Activated CD4-positive, alpha-beta T cell treated with anti-CD3 and anti-CD28 coated beads for 36 hours (primary cell): ENCODE measurements at regions of chr4 and their contacts with region 1.

Region 1: GRCh38 chr4:7831330-7831729 is 108.3 kb downstream of the AFAP1 start:
- DNase-seq: peak; percentile 63
- ATAC-seq: peak; percentile 87
- H3K4me3 Mint-ChIP-seq: no peak overlapping the region
- H3K27ac Mint-ChIP-seq: peak overlapping the region; percentile 69
- H3K4me1 Mint-ChIP-seq: peaks cover 56% of the 10 kb centered on the region
- H3K27me3 Mint-ChIP-seq: no peaks in the 10 kb centered on the region

Region 2: DNA sequence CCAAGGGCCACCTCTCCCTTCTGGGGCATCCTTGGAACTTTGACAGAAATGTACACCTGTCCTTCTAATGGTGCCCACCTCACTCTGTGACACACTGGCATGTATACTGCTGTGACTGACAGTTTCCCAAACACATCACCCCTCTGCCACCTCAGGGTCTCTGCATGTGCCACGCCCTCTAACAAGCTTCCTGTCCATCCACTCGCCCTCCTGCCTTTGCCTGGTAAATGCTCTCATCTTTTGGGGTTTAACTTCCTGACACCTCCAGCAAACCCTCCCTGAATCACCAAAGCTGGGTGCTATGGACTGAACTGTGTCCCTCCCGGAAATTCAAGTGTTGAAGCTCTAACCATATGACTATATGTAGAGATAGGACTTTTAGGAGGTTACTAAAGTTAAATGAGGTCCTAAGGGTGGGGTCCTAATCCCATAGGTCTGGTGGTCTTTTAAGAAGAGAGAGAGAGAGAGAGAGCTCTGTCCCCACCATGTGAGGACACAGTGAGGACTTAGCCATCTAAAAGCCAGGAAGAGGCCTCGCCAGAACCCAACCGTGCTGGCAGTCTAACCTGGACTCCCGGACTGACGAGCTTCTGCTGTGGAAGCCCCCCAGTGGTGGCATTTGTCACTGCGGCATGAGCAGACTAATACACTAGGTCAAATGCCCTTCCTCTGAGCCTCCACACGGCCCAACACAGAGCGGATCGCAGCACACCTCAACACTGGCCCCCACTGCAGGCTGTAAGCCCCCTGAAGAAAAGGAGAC is 12.7 kb after region 1 on chr4:
- CTCF ChIA-PET with region 1: interaction called, 10 read pairs
- POLR2A ChIA-PET with region 1: no interaction called
- intact Hi-C with region 1: no loop called
- DNase-seq: peak; percentile 83
- ATAC-seq: peak; percentile 87
- H3K4me3 Mint-ChIP-seq: no peak overlapping the region
- H3K27ac Mint-ChIP-seq: peak overlapping the region; percentile 52
- H3K4me1 Mint-ChIP-seq: peaks cover 27% of the 10 kb centered on the region
- H3K27me3 Mint-ChIP-seq: no peaks in the 10 kb centered on the region

Region 3: DNA sequence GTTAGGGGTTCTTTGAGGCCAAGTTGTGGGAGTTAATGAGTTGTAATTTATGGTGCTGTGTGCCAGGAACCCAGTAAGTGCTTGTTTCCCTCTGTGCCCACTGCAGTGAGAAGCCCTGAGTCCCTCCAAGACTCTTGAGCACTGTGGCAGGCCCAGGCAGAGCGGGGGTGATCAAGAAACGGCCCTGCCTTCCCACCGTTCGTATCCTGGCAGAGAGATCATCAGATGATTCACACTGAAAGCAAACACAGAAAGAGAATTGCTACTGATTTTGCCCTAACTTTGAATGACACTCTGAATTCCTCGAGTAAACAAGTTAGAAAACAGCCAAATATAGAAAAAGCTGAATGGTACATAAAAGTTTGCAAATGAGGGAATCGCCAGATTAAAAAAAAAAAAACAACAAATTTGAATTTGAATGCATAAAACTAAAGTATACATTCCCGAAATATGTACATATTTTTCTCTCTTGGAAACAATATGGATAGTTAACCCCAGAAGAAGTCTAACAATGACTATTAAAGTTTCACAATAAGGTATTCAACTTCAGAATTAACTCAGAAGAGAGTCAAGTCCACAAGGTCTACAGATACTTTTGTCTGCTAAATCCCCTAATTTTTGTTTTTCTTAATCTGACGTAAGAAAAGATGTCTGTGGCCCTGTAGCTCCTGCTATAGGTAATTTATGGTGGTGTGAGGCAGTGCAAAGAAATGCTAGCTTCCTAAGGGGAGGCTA is 36.5 kb after region 1 on chr4:
- CTCF ChIA-PET with region 1: no interaction called
- POLR2A ChIA-PET with region 1: no interaction called
- intact Hi-C with region 1: loop called in 1 of 2 experiments (anchors 1 kb)
- DNase-seq: peak; percentile 51
- ATAC-seq: peak; percentile 53
- H3K4me3 Mint-ChIP-seq: no peak overlapping the region
- H3K27ac Mint-ChIP-seq: peak overlapping the region; percentile 74
- H3K4me1 Mint-ChIP-seq: peaks cover 30% of the 10 kb centered on the region
- H3K27me3 Mint-ChIP-seq: no peaks in the 10 kb centered on the region

Region 4: DNA sequence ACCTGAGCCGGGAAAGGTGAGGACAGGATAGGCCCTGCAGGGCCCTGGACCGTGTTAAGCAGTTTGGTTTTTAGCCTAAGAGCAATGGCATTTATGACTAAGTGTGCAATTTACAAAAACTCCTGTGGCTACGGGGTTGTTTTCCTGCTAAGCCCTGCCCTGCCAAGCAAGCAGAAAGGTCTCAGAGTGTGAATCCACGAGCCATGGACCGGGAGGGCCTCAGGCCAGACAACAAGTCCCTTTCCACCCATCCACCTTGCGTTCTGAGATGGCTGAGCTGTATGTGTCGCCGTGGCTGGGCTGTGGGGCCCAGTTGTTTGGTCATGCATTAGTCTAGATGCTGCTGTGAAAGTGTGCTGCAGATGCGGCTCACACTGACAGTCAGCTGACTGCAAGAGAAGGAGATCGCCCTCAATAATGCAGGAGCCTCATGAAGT is 142.2 kb after region 1 on chr4:
- CTCF ChIA-PET with region 1: no interaction called
- POLR2A ChIA-PET with region 1: no interaction called
- intact Hi-C with region 1: no loop called
- DNase-seq: peak; percentile 41
- ATAC-seq: peak; percentile 10
- H3K4me3 Mint-ChIP-seq: no peak overlapping the region
- H3K27ac Mint-ChIP-seq: peak overlapping the region; percentile 52
- H3K4me1 Mint-ChIP-seq: peaks cover 44% of the 10 kb centered on the region
- H3K27me3 Mint-ChIP-seq: no peaks in the 10 kb centered on the region

Region 5: DNA sequence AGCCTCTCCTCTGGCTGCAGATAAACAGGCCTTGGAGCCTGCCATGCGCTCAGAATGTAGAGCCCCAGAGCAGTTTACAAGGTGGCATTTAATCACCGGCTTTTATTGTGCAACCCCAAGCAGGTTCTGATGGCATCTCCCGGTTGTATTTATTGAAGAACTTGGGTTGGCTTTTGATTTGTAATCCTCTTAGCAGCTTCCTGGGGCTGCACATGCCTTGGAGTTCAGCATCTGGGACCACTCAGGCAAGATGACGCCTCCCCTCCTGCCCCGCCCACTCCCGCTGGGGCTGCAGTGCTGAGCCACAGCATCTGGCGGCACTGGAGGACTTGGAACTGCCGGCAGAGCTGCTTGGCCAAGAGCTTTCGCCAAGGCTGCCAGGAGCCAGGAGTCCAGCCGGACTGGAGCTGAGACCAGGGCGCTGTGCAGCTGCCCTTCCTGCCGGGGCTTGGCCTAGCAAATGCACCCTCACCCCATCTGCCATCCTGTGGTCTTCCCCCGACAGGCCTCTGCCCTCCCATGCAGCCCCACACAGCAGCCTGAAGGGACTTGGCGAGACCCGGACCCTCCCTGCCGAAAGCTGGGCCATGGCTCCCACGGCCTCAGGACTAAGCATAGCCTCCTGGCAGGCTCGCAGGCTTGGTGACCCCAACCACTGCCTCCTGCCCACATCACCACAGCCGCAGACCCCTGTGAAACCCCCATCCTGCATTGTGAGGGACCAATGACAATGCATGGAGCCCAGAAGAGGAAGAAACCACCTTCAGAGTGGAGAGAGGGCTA is 443.6 kb after region 1 on chr4:
- CTCF ChIA-PET with region 1: no interaction called
- POLR2A ChIA-PET with region 1: no interaction called
- intact Hi-C with region 1: no loop called
- DNase-seq: no peak
- ATAC-seq: no peak
- H3K4me3 Mint-ChIP-seq: no peak overlapping the region
- H3K27ac Mint-ChIP-seq: no peak overlapping the region
- H3K4me1 Mint-ChIP-seq: no peaks in the 10 kb centered on the region
- H3K27me3 Mint-ChIP-seq: peaks cover 22% of the 10 kb centered on the region